Lower leg skin (tissue), 4 donors: ENCODE measurements at regions of chr19 and their contacts with region 1.

Region 1: DNA sequence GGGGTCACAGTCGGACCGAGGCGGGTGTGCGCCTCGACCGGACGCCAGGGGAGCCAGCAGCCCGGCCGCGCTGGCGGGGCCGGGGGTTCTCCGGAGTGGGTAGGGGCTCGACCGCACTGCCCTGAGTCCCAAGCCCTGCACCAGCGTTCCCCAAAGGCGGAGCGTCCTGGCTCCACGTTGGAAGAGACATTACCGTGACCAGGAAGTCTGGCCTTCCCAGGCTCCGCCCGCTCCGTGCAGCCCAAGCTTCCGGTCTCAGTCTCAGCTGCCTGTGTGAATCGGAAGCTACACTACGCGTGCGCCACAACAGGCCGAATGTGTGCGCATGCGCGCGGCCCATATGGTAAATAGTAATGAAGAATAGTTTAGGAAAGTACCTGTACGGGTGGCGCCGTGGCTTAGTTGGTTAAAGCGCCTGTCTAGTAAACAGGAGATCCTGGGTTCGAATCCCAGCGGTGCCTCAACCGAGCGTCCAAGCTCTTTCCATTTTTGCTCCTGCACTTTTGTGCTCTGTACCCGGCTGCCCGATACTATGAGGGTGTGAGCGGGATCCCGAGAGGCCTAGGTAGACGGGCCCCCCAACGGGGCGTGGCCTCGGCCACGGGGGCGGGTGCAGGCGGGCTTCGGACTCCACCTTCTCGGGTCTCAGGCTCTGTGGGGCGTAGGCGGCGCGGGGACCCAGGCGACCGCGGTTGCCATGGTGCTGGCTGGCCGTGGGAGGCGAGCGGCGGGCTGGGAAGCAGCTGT is 17.3 kb upstream of the LRP3 start:
- DNase-seq: peak; percentile 98 to 99
- H3K4me3 ChIP-seq: peak overlapping the region; percentile 89
- CTCF ChIP-seq: no peak
- POLR2A ChIP-seq: no peak

Region 2: DNA sequence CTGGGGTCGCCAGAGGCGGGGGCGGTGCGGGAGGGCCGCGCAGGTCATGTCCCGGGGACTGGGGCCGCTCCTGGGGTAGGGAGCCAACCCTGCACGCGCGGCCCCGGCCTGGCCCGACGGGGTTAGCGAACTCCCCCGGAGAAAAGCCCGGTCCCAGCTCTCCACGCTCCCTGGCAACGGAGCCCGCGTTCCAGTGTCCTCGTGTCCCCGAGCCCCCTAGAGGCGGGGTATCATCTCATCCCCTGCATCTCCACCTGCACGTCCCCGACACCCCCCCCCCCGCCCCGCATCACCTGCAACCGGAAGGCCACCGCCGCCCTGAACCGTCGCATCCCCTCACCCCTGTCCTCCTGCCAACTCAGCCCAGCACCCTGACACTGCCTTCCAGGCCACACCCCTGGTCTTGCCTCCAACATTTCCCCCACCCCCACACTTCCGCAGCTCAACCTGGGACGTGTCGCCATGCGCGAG is 42.2 kb before region 1 on chr19:
- intact Hi-C with region 1: loop called (anchors 5 kb)
- DNase-seq: no peak
- H3K4me3 ChIP-seq: no peak overlapping the region
- CTCF ChIP-seq: no peak
- POLR2A ChIP-seq: no peak

Region 3: DNA sequence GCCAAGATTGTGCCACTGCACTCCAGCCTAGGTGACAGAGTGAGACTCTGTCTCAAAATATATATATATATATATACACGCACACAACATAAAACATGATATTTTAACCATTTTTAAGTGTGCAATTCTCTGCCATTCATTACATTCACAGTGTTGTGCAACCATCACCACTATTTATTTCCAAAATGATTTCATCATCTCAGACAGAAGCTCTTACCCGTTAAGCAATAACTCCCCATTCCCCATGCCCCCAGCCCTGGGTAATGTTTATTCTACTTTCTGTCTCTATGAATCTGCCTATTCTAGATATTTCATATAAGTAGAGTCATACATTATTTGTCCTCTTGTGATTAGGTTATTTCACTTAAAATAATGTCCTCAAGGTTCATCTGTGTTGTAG is 24.7 kb before region 1 on chr19:
- intact Hi-C with region 1: no loop called
- DNase-seq: no peak
- H3K4me3 ChIP-seq: no peak overlapping the region
- CTCF ChIP-seq: no peak
- POLR2A ChIP-seq: no peak

Region 4: GRCh38 chr19:33226550-33227241 is 49.9 kb after region 1 on chr19:
- intact Hi-C with region 1: no loop called
- DNase-seq: no peak
- H3K4me3 ChIP-seq: no peak overlapping the region
- CTCF ChIP-seq: no peak
- POLR2A ChIP-seq: no peak

Region 5: GRCh38 chr19:33260628-33261418 is 84.0 kb after region 1 on chr19:
- intact Hi-C with region 1: no loop called
- DNase-seq: no peak
- H3K4me3 ChIP-seq: no peak overlapping the region
- CTCF ChIP-seq: no peak
- POLR2A ChIP-seq: no peak

Region 6: GRCh38 chr19:33819880-33820781 is 643.3 kb after region 1 on chr19:
- intact Hi-C with region 1: loop called (anchors 5 kb)
- DNase-seq: peak; percentile 91 to 97
- H3K4me3 ChIP-seq: no peak overlapping the region
- CTCF ChIP-seq: no peak
- POLR2A ChIP-seq: no peak